ENCODE measurements at regions of chr14 and their contacts with region 1.

Region 1: GRCh38 chr14:54754623-54755386 is 147.8 kb downstream of the GCH1 start:
- DNase-seq: peak; percentile 83 to 95 (median 87)
- ATAC-seq: peak; percentile 91
- H3K4me3 ChIP-seq: peak overlapping the region; percentile 26
- H3K27ac ChIP-seq: peak overlapping the region; percentile 97
- H3K4me1 ChIP-seq: peaks cover 14 to 49% of the 10 kb centered on the region in 2 experiments
- H3K27me3 ChIP-seq: no peaks in the 10 kb centered on the region
- CTCF ChIP-seq: no peak
- EP300 ChIP-seq: peak; percentile 97
- POLR2A ChIP-seq: peak; percentile 77
- RAD21 ChIP-seq: no peak

Region 2: GRCh38 chr14:54728700-54729527 is 25.9 kb before region 1 on chr14:
- CTCF ChIA-PET with region 1: no interaction called
- POLR2A ChIA-PET with region 1: interaction called, 7 read pairs
- in situ Hi-C with region 1: no loop called
- intact Hi-C with region 1: loop called (anchors 1 kb)
- DNase-seq: peak in 1 of 4 experiments; percentile 70
- ATAC-seq: peak; percentile 76
- H3K4me3 ChIP-seq: peak overlapping the region; percentile 50
- H3K27ac ChIP-seq: peak overlapping the region; percentile 89
- H3K4me1 ChIP-seq: peaks cover 0 to 27% of the 10 kb centered on the region in 2 experiments; a peak in 4 of 5 replicates
- H3K27me3 ChIP-seq: no peaks in the 10 kb centered on the region
- CTCF ChIP-seq: no peak
- EP300 ChIP-seq: peak; percentile 80
- POLR2A ChIP-seq: peak; percentile 53; the same call in 1 of the 2 replicates
- RAD21 ChIP-seq: no peak

Region 3: DNA sequence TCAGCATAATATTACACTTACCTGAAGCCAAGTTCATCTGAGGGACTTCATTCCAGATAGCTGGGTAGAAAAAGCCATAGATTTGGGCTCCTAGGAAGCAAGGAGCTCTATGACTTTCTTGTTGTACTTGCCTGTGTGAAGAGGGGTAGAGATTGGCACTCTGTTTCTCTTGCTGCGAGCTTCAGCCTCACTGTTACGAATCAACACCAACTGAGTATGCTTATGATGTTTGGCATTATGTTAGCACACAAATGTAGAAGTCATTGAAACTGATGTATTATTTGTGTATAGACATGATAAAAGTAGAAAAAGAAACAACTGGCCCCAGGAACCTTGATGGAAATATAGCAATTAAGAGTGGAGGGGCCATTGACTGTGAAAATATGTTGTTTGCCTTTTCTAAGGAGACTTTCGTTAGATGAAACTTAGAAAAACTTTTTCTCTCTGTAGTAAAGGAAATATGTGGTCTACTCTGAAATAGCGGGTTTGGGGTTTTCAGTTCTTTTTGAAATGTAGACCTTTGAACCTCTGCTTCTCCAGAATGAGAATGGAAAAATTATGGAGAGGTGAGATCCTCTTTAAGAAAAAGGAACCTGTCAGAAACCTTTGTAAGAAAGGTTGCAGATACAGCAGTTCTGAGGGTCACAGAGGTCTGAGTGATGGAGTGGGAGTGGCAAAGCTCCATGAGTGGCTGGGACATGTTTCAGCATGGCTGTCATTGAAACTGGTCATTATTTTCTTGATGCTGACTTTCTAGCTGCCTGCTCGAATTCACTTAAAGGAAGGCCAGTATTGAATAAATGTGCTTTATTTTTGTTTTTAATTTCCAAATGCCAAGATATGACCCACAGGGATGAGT is 12.1 kb before region 1 on chr14:
- CTCF ChIA-PET with region 1: no interaction called
- POLR2A ChIA-PET with region 1: interaction called, 16 read pairs
- in situ Hi-C with region 1: no loop called
- intact Hi-C with region 1: no loop called
- DNase-seq: no peak
- ATAC-seq: no peak
- H3K4me3 ChIP-seq: no peak overlapping the region
- H3K27ac ChIP-seq: no peak overlapping the region
- H3K4me1 ChIP-seq: no peaks in the 10 kb centered on the region; a peak in 2 of 5 replicates
- H3K27me3 ChIP-seq: no peaks in the 10 kb centered on the region
- CTCF ChIP-seq: no peak
- EP300 ChIP-seq: no peak
- POLR2A ChIP-seq: no peak
- RAD21 ChIP-seq: no peak